ENCODE measurements at regions of chr19 and their contacts with region 1.

Region 1: DNA sequence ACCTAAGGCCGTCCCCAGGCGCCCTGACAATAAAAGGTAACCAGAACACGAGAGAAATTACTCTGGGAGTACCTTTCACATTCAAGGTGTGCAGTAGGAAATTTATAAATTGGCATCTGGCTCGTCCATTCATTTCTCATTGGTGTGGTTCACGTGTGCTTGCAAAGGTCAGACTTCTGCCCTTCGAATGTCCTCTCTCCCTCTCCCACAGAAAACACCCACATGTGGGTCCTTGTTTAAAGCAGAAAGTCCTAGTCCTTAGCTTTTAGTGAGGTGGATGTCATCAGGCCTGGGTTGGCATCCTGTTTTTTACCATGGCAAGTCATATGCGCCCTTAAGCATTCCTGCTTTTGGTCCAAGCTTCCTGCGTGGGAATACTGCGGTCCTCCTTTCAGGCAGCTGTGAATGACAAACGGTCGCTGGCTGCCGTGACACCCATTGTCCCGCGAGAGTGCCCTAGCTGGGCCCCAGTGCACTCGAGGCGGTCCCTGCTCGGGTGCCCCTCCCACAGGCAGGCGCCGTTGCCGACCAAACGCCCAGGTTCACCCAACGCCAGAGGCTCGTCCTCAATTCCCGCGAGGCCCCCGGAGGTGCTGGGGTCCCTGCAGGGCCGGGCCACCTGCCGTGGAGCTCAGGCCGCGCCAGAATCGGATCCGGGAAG is at the start of gene NUDT19:
- DNase-seq: peak; percentile 74
- H3K4me3 Mint-ChIP-seq: peak within 1 kb of the TSS; percentile 95
- H3K27ac Mint-ChIP-seq: peak within 1 kb of the TSS; percentile 98
- H3K4me1 Mint-ChIP-seq: peaks cover 54% of the 10 kb centered on the region
- H3K27me3 Mint-ChIP-seq: no peaks in the 10 kb centered on the region
- total RNA-seq, gene NUDT19: 24.4 and 26.2 TPM in 2 replicates

Region 2: GRCh38 chr19:32345261-32346207 is 345.9 kb before region 1 on chr19 and contains the start of gene ZNF507:
- intact Hi-C with region 1: loop called (anchors 5 kb)
- DNase-seq: peak; percentile 82
- H3K4me3 Mint-ChIP-seq: peak within 1 kb of the TSS; percentile 96
- H3K27ac Mint-ChIP-seq: peak within 1 kb of the TSS; percentile 96
- H3K4me1 Mint-ChIP-seq: peaks cover 40% of the 10 kb centered on the region
- H3K27me3 Mint-ChIP-seq: peaks cover 7% of the 10 kb centered on the region
- total RNA-seq, gene ZNF507: 32.4 and 34.8 TPM in 2 replicates

Region 3: GRCh38 chr19:32580901-32581703 is 110.3 kb before region 1 on chr19 and contains the start of gene PDCD5:
- intact Hi-C with region 1: loop called (anchors 2 kb)
- DNase-seq: peak; percentile 91
- H3K4me3 Mint-ChIP-seq: peak within 1 kb of the TSS; percentile 96
- H3K27ac Mint-ChIP-seq: peak within 1 kb of the TSS; percentile 86
- H3K4me1 Mint-ChIP-seq: peaks cover 33% of the 10 kb centered on the region
- H3K27me3 Mint-ChIP-seq: peaks cover 9% of the 10 kb centered on the region
- total RNA-seq, gene PDCD5: 203 TPM in 2 replicates

Region 4: DNA sequence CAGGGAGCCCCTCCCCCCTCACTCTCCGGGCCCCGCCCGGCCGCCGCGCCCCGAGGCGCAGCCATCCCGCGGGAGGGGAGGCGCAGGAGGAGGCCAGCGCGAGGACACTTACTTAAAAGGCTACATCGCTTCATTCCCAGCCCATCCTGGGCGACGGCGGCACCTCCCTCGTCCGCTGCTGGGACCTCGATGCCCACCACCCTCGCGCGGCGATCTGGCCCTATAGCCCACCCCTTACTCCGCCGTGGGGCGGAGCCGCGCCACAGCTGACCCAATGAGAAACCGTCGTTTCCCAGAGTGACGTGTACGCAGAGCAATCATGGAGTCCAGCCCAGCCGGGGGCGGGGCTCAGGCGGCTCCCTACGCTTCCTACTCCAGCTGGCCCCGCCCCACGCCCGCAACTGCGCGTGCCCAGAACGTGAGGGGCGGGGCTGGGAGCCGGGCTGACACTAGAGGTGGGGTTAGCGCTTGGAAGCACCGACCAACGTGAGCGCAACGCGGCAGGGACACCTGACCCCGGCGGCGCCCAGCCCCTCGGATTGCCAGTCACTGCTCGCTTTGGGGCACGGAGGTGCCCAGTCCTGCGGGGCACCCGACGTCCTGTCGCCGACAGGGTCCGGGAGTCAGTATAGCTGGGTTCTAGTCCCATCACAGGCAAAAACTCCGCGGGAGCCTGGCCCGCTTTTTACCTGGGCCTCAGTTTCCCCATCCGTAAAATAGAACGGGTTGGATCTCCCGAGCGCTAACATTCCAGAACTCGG is 16.3 kb before region 1 on chr19 and contains the start of gene ANKRD27:
- intact Hi-C with region 1: loop called (anchors 1 kb)
- DNase-seq: peak; percentile 98
- H3K4me3 Mint-ChIP-seq: peak within 1 kb of the TSS; percentile 89
- H3K27ac Mint-ChIP-seq: peak within 1 kb of the TSS; percentile 89
- H3K4me1 Mint-ChIP-seq: peaks cover 28% of the 10 kb centered on the region
- H3K27me3 Mint-ChIP-seq: peaks cover 31% of the 10 kb centered on the region
- total RNA-seq, gene ANKRD27: 28.2 and 28.7 TPM in 2 replicates

Region 5: GRCh38 chr19:32971715-32972540 is 280.5 kb after region 1 on chr19 and contains the starts of genes CEP89 and FAAP24:
- intact Hi-C with region 1: loop called (anchors 1 kb)
- DNase-seq: peak; percentile 98
- H3K4me3 Mint-ChIP-seq: peak within 1 kb of the TSS; percentile 96
- H3K27ac Mint-ChIP-seq: peak within 1 kb of the TSS; percentile 86
- H3K4me1 Mint-ChIP-seq: peaks cover 15% of the 10 kb centered on the region
- H3K27me3 Mint-ChIP-seq: no peaks in the 10 kb centered on the region
- total RNA-seq, gene CEP89: 15.5 and 17.2 TPM in 2 replicates
- total RNA-seq, gene FAAP24: 10.7 and 11.2 TPM in 2 replicates

Region 6: DNA sequence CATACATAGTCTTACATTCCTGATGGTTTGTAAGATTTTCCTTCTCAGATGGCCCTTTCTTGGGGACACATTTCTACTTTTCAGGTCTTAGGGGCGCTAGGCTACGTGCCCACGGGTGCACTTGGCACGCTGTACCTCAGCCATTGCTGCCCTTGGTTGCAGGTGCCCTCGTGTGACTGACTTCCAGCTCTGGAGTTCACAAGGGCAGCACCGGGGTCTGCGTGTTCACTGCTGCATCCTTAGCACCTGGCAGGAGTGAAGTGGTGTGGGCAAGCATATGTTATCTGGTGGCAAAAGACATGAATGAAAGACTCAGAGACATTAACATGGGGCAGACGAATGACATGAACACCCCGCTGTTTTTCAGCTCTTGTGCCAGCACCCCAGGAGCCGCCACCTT is 427.2 kb after region 1 on chr19:
- intact Hi-C with region 1: loop called (anchors 1 kb)
- DNase-seq: no peak
- H3K4me3 Mint-ChIP-seq: no peak overlapping the region
- H3K27ac Mint-ChIP-seq: no peak overlapping the region
- H3K4me1 Mint-ChIP-seq: no peaks in the 10 kb centered on the region
- H3K27me3 Mint-ChIP-seq: no peaks in the 10 kb centered on the region